GM10248 (cell line): ENCODE measurements at regions of chr7 and their contacts with region 1.

Region 1: GRCh38 chr7:128946923-128947830 is 9.4 kb downstream of the IRF5 start:
- DNase-seq: no peak
- CTCF ChIP-seq: peak; percentile 46

Region 2: GRCh38 chr7:128968624-128969023 is 21.4 kb after region 1 on chr7:
- CTCF ChIA-PET with region 1: interaction called, 140 read pairs
- POLR2A ChIA-PET with region 1: interaction called, 3 read pairs
- DNase-seq: no peak
- CTCF ChIP-seq: no peak

Region 3: DNA sequence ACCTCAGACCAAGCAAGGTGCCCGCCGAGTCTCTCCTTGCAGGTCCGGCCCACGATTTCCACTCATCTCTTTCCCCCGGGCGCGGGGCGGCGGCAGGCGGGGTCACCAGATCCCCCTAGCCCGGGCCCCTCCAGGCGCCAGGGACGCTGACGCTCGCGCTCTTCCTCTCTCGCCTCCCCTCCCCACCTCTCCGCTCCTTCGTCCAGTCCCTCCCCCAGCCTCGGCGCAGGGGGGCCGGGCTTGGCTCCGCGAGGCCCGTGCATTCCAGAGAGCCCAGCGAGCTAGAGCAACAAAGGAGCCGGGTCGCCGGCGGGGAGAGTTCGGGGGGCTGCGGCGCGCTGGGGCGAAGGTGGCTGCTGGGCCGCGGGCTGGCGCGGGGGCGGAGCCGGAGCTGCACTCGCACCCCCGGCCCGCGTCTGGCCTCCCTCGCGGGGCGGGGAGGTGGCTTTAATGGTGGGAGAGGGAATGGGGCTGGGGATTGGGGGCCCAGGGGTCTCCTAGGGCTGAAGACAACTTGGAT is 241.3 kb after region 1 on chr7 and contains the start of gene SMO:
- CTCF ChIA-PET with region 1: no interaction called
- POLR2A ChIA-PET with region 1: no interaction called
- DNase-seq: peak; percentile 69
- CTCF ChIP-seq: no peak